SK-N-SH (cell line): ENCODE measurements at regions of chr3 and their contacts with region 1.

Region 1: GRCh38 chr3:58249358-58250092 is 11.9 kb downstream of the ABHD6 start:
- DNase-seq: no peak
- H3K4me3 ChIP-seq: no peak overlapping the region
- H3K27ac ChIP-seq: no peak overlapping the region
- H3K4me1 ChIP-seq: no peaks in the 10 kb centered on the region; a peak in 1 of 4 replicates
- H3K27me3 ChIP-seq: no peaks in the 10 kb centered on the region
- CTCF ChIP-seq: no peak
- EP300 ChIP-seq: no peak
- RAD21 ChIP-seq: no peak

Region 2: GRCh38 chr3:58237238-58237940 is 12.1 kb before region 1 on chr3 and contains the start of gene ABHD6:
- CTCF ChIA-PET with region 1: interaction called, 17 read pairs
- POLR2A ChIA-PET with region 1: no interaction called
- DNase-seq: peak; percentile 94
- H3K4me3 ChIP-seq: peak within 1 kb of the TSS; percentile 79 to 86
- H3K27ac ChIP-seq: peak within 1 kb of the TSS; percentile 50 to 65; a peak in 3 of 4 replicates
- H3K4me1 ChIP-seq: peaks cover 0 to 13% of the 10 kb centered on the region in 2 experiments; a peak in 1 of 4 replicates
- H3K27me3 ChIP-seq: no peaks in the 10 kb centered on the region
- CTCF ChIP-seq: peak; percentile 56
- EP300 ChIP-seq: no peak
- RAD21 ChIP-seq: peak; percentile 58
- polyA plus RNA-seq, gene ABHD6: 10.7 and 14.8 TPM in 2 replicates